Calu3 (cell line): ENCODE measurements at regions of chr7 and their contacts with region 1.

Region 1: GRCh38 chr7:66033471-66034385 is 41.9 kb upstream of the ASL start:
- DNase-seq: no peak
- H3K4me3 Mint-ChIP-seq: no peak overlapping the region
- H3K27ac Mint-ChIP-seq: no peak overlapping the region
- H3K4me1 Mint-ChIP-seq: no peaks in the 10 kb centered on the region
- H3K27me3 Mint-ChIP-seq: no peaks in the 10 kb centered on the region
- CTCF ChIP-seq: no peak

Region 2: DNA sequence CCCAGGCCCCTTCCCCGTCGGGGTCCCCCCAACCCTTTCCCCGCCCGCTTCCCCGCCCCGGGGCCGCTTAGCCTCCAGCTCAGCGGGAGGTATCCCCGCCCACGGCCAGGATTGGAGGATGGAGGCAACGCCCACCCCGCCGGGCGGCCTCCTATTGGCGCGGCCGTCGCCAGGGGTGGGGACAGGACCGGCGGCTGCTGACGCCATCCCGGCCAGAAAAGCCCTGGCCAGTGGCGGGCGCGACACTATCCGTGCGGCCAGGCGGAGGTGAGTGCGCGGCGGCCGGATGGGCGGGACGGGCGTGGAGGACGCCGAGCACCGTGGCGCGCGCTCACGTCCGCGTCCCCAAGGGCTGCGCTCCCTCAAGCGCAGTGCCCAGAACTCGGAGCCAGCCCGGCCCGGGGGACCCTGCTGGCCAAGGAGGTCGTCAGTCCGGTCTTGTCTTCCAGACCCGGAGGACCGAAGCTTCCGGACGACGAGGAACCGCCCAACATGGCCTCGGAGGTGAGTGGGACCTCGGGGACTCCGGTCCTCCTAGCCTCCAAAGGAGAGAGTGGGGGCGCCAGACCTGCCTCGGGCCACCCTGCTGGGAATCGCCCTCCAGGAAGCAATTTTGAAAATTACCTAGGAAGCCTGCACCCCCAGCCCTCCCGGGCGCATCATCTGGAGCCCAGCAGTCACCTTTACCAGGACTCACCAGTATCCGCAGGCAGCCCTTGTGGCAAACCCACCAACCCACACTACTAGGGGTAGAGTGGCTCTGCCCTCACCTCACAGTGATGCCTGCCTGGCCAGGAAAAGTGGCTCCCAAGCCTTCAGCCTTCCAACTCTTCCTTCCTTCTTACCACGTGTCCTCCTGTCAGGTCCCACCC is 42.1 kb after region 1 on chr7 and contains the start of gene ASL:
- CTCF ChIA-PET with region 1: interaction called, 14 read pairs
- intact Hi-C with region 1: no loop called
- DNase-seq: peak; percentile 92
- H3K4me3 Mint-ChIP-seq: peak within 1 kb of the TSS; percentile 77
- H3K27ac Mint-ChIP-seq: peak within 1 kb of the TSS; percentile 84
- H3K4me1 Mint-ChIP-seq: peaks cover 5% of the 10 kb centered on the region
- H3K27me3 Mint-ChIP-seq: no peaks in the 10 kb centered on the region
- CTCF ChIP-seq: no peak
- total RNA-seq, gene ASL: 55.3 and 70.6 TPM in 2 replicates

Region 3: GRCh38 chr7:66150471-66150870 is 116.7 kb after region 1 on chr7:
- CTCF ChIA-PET with region 1: interaction called, 3 read pairs
- intact Hi-C with region 1: loop called (anchors 10 kb)
- DNase-seq: no peak
- H3K4me3 Mint-ChIP-seq: no peak overlapping the region
- H3K27ac Mint-ChIP-seq: no peak overlapping the region
- H3K4me1 Mint-ChIP-seq: no peaks in the 10 kb centered on the region
- H3K27me3 Mint-ChIP-seq: no peaks in the 10 kb centered on the region
- CTCF ChIP-seq: no peak